MCF 10A (cell line): ENCODE measurements at regions of chr5 and their contacts with region 1.

Region 1: GRCh38 chr5:169548315-169548714 is 35.3 kb upstream of the SPDL1 start:
- DNase-seq: peak; percentile 55
- H3K4me3 Mint-ChIP-seq: no peak overlapping the region
- H3K27ac Mint-ChIP-seq: no peak overlapping the region
- H3K4me1 Mint-ChIP-seq: no peaks in the 10 kb centered on the region
- H3K27me3 Mint-ChIP-seq: peaks cover 30% of the 10 kb centered on the region
- CTCF ChIP-seq: peak; percentile 78

Region 2: DNA sequence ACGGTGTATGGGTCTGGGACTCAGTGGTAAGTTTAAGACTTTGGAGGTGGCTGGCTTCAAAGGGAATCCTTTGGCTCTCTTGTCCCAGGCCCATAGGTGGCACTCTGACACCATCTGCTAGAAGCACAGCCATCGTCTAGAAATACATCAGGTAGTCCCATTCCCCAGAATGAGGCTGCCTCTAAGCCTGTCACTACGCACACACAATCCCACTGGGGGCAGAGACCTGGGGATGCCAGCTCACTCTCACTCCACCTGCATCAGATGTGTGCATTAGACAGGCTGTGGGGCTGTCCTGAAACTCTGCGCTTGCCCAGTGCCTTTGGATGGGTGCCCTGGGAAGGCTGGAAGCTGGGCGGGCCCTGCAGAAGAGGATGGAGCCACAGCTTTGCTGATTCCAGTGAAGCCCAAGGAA is 841.7 kb before region 1 on chr5:
- CTCF ChIA-PET with region 1: interaction called, 7 read pairs
- POLR2A ChIA-PET with region 1: no interaction called
- intact Hi-C with region 1: loop called (anchors 1 kb)
- DNase-seq: peak; percentile 60
- H3K4me3 Mint-ChIP-seq: no peak overlapping the region
- H3K27ac Mint-ChIP-seq: no peak overlapping the region
- H3K4me1 Mint-ChIP-seq: no peaks in the 10 kb centered on the region
- H3K27me3 Mint-ChIP-seq: no peaks in the 10 kb centered on the region
- CTCF ChIP-seq: peak; percentile 53

Region 3: DNA sequence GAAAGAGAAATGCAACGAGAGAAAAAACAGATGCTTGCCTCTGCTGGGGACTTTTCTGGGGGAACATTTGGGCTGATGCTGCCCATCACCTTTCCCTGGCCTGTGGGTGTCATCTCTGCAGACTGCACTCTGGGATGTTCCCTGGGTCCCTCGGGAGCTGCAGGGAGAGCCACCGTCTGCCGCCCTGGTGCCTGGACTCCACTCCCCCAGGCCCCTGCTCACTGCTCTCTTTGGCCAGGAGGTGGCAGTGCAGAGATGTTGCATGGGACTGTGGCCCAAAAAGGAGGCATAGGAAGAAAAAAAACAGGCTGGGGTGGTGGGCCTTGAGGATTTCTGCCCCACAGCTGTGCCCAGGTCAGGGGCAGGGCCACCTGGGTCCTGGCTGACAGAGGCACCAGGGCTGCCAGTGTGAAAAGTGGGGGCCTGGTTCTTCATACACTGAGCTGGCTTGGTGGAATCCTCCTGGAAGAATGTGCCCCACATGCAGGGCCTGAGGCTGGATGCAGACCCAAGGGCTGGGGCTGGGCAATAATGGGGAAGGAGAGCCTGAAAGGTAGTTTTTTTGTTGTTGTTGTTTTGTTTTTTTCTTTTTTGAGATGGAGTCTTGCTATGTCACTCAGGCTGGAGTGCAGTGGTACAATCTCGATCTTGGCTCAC is 601.0 kb before region 1 on chr5:
- CTCF ChIA-PET with region 1: interaction called, 11 read pairs
- POLR2A ChIA-PET with region 1: no interaction called
- intact Hi-C with region 1: no loop called
- DNase-seq: peak; percentile 77
- H3K4me3 Mint-ChIP-seq: no peak overlapping the region
- H3K27ac Mint-ChIP-seq: no peak overlapping the region
- H3K4me1 Mint-ChIP-seq: no peaks in the 10 kb centered on the region
- H3K27me3 Mint-ChIP-seq: no peaks in the 10 kb centered on the region
- CTCF ChIP-seq: peak; percentile 83

Region 4: GRCh38 chr5:169265888-169266287 is 282.4 kb before region 1 on chr5:
- CTCF ChIA-PET with region 1: interaction called, 15 read pairs
- POLR2A ChIA-PET with region 1: no interaction called
- intact Hi-C with region 1: loop called (anchors 1 kb)
- DNase-seq: peak; percentile 50
- H3K4me3 Mint-ChIP-seq: no peak overlapping the region
- H3K27ac Mint-ChIP-seq: no peak overlapping the region
- H3K4me1 Mint-ChIP-seq: no peaks in the 10 kb centered on the region
- H3K27me3 Mint-ChIP-seq: no peaks in the 10 kb centered on the region
- CTCF ChIP-seq: peak; percentile 39

Region 5: GRCh38 chr5:169350759-169351240 is 197.5 kb before region 1 on chr5:
- CTCF ChIA-PET with region 1: interaction called, 10 read pairs
- POLR2A ChIA-PET with region 1: no interaction called
- intact Hi-C with region 1: no loop called
- DNase-seq: peak; percentile 100
- H3K4me3 Mint-ChIP-seq: peak overlapping the region; percentile 49
- H3K27ac Mint-ChIP-seq: peak overlapping the region; percentile 75
- H3K4me1 Mint-ChIP-seq: peaks cover 53% of the 10 kb centered on the region
- H3K27me3 Mint-ChIP-seq: no peaks in the 10 kb centered on the region
- CTCF ChIP-seq: no peak